ENCODE measurements at regions of chr1 and their contacts with region 1.

Region 1: GRCh38 chr1:222910699-222911098 is 95.9 kb downstream of the DISP1 start:
- DNase-seq: no peak
- ATAC-seq: no peak

Region 2: DNA sequence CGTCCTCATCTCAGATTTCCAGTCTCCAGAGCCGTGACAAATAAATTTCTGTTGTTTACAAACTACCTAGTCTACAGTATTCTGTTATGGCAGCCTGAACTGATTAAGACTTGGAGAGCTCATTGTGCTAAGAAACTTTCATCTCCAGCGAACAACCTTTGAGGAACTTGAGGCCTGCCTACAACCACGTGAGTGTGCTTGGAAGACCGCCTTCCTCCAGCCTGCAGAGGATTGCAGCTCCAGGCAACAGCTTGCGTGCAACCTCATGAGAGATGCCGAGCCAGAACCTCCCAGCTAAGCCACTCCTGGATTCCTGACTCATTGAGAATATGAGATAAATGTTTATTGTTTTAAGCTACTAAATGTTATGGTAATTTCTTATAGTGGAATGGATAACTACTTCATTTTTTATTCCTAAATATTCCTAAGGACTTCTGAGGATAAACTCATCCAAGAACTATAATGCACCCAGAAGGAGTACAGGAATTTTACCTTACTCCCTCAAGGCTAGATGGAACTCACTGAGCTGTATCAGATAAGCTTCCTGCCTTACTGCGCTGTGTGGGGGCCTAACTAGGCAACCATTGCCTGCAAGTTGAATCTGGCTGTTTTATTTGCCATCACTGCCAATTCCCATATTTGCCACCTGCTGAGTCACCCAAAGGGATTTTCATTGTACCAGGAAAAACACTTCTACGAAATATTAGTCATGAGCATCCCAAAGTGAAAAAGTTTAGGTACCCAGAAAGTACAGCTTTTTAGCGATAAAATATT is 156.1 kb before region 1 on chr1:
- intact Hi-C with region 1: no loop called
- DNase-seq: no peak
- ATAC-seq: peak; percentile 88

Region 3: GRCh38 chr1:222897527-222898190 is 13.0 kb before region 1 on chr1:
- intact Hi-C with region 1: loop called (anchors 1 kb)
- DNase-seq: no peak
- ATAC-seq: no peak

Measured in Right ventricle myocardium inferior (tissue), 1 donor.